Caco-2 (cell line): ENCODE measurements at regions of chr17 and their contacts with region 1.

Region 1: DNA sequence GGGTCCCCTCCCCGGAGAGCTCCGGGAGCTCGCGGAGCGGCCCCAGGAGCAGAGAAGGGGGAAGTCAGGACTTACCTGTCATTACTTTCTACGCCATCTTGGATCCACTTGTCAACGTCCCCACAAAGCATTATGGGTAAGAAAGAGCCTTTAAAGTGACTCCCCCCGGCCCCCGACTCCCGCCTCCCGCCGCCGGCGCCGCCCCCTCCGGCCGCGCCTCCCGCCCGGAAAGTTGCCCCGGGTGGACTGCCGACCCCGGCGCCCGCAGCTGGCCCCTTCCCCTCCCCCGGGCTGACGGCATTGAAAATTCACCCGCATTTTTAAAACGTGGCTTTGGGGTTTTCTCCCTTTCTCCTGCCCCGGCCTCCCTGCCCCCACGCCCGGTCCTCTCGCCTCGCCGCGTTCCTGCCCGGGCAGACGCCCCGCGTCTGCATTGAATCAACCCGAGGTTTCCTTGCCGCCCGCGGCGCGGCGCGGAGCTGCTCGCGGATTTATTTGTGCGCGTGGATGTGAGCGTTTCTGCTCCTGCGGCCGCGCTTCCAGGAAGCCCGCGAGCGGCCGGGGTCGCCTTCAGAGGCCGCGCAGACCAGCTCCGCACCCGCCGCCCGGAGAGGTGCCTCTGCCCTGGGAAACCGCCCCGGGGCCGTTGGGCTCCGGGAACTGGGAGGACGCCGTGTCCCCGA is at the start of gene HELZ:
- DNase-seq: peak; percentile 89 to 92
- H3K4me3 ChIP-seq: peak within 1 kb of the TSS; percentile 92
- H3K4me3 Mint-ChIP-seq: peak within 1 kb of the TSS; percentile 92
- H3K27ac Mint-ChIP-seq: peak within 1 kb of the TSS; percentile 93
- H3K4me1 ChIP-seq: peaks cover 36% of the 10 kb centered on the region
- H3K4me1 Mint-ChIP-seq: peaks cover 39% of the 10 kb centered on the region
- H3K27me3 ChIP-seq: no peaks in the 10 kb centered on the region
- H3K27me3 Mint-ChIP-seq: no peaks in the 10 kb centered on the region
- CTCF ChIP-seq: no peak
- total RNA-seq, gene HELZ: 63.8 and 70.0 TPM in 2 replicates

Region 2: DNA sequence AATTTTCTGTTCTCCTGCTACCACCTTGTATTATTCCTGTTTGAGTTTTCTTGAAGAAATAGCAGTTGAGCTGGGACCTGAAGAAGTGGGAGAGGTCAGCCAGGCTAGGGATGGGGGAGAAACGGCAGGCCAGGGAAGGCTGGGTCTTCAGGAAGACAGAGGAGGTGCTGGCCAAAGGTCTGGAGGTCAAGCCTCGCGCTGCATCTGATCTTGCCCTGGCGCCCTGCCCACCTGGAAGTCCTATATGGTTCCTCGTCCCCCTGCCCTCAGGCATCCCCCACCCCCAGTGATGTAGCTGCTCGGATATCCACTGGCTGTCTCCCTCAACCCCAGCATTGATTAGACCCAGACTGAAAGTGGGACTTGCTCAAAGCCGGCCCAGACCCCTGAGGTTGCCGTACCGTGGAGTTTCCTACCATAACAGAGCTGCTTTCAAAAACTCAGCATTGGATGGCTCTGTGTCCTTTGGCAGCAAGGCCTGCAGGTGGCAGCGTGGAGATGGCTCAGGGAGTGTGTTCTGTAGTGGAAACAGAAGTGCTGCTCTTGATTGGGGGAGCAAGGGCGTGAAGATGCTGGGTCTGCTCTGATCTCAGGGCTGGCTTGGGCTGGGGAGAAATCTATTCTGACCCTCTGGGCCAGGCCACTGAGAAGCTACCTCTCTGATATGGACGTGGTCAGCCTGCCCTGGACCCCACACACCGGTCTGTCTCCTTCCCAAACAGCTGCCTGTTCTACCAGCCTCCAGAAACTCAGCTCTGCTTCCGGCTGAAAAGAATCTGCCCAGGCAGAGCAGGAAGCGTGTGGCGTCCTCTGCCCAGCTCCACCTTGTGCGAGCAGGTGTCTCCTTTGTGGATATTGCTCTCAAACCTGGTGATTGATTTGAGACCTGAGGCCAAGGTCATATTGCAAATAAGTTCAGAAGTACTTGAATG is 517.3 kb before region 1 on chr17:
- CTCF ChIA-PET with region 1: no interaction called
- POLR2A ChIA-PET with region 1: no interaction called
- intact Hi-C with region 1: loop called (anchors 10 kb)
- DNase-seq: peak; percentile 62 to 69
- H3K4me3 ChIP-seq: no peak overlapping the region
- H3K4me3 Mint-ChIP-seq: no peak overlapping the region
- H3K27ac Mint-ChIP-seq: no peak overlapping the region
- H3K4me1 ChIP-seq: no peaks in the 10 kb centered on the region
- H3K4me1 Mint-ChIP-seq: no peaks in the 10 kb centered on the region
- H3K27me3 ChIP-seq: no peaks in the 10 kb centered on the region
- H3K27me3 Mint-ChIP-seq: no peaks in the 10 kb centered on the region
- CTCF ChIP-seq: peak; percentile 60 to 90

Region 3: DNA sequence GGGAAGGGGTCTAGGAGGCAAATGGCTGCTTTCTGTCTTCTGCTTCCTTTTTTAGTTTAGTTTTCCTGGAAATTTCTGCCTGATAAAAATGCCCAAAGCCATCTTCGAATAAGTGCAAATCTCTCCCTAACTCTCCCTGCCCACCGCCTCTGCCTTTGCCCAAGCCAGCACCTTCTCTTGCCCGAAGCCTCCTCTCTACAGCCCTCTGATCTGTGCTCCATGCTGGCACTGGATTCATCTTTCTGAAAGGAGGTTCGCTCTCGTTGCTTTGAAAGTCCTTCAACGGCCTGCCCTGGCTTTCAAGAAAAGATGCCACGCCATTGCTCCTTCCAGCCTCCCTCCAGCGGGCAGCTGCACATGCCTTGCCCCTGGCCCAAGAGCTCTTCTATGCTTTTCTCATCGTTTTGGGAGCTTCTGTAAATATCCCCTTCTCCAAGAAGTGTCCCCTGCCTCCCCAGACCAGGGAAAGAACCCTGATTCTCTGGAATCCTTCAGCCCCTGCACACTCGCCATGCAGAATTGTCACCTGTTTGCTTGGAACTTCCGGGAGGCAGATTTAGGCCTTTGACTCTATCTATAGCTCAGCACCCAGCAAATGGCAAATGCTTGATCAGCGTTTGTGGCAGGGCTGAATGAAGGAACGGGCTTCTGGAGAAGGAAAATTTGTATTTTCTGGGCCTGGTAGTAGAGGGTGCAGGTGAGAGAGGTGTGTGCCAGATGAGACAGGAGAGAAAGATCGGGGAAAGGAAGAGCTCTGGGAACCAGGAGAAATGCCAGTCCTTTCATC is 299.2 kb before region 1 on chr17:
- CTCF ChIA-PET with region 1: no interaction called
- POLR2A ChIA-PET with region 1: interaction called, 14 read pairs
- intact Hi-C with region 1: no loop called
- DNase-seq: no peak
- H3K4me3 ChIP-seq: no peak overlapping the region
- H3K4me3 Mint-ChIP-seq: no peak overlapping the region
- H3K27ac Mint-ChIP-seq: peak overlapping the region; percentile 26
- H3K4me1 ChIP-seq: peaks cover 40% of the 10 kb centered on the region
- H3K4me1 Mint-ChIP-seq: peaks cover 59% of the 10 kb centered on the region
- H3K27me3 ChIP-seq: no peaks in the 10 kb centered on the region
- H3K27me3 Mint-ChIP-seq: no peaks in the 10 kb centered on the region
- CTCF ChIP-seq: no peak

Region 4: DNA sequence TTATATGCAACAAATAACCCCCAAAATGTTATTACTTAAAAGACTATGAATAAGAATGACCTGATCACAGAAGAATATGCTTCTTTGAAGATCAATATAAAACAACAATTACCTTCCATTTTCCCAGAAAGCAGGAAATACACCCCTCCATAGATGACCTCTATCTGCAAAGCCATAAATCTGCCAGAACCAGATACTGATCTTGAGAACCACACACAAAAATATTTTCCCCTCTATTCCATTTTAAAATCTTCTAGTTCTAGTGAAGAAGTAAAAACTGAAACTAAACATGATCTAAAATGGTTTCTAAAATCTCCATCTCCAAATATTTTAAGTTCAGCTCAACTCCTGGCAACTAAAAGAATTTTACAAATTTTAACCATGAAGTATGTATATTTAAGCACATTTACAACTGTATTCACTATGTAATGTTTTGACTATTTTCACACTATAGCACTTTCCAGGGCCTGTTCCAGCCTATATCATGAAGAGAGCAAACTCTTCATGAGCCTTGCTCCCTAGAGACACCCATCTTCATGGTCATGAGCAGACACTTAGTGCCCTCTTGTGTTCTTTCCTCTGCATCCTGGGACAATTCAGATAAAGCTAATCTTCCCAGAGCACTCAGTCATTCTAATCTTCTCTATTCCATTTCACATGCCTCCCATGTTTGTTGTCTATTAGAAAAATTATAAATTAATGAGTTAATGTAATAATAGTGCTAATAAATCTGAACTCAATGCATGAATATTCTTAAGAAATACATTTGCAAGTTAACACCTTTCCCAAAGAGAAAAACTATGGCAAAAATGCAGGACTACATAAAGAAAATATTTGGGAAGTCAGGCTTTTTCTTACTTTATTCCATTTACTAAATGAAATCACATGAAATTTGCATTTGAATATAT is 87.2 kb before region 1 on chr17:
- CTCF ChIA-PET with region 1: no interaction called
- POLR2A ChIA-PET with region 1: no interaction called
- intact Hi-C with region 1: no loop called
- DNase-seq: peak in 1 of 2 experiments; percentile 36
- H3K4me3 ChIP-seq: no peak overlapping the region
- H3K4me3 Mint-ChIP-seq: no peak overlapping the region
- H3K27ac Mint-ChIP-seq: no peak overlapping the region
- H3K4me1 ChIP-seq: 0 out of 2 replicates have a peak, but pooled peaks cover 4% of the 10 kb centered on the region
- H3K4me1 Mint-ChIP-seq: no peaks in the 10 kb centered on the region
- H3K27me3 ChIP-seq: no peaks in the 10 kb centered on the region
- H3K27me3 Mint-ChIP-seq: no peaks in the 10 kb centered on the region
- CTCF ChIP-seq: peak in 1 of 2 experiments; percentile 39

Region 5: DNA sequence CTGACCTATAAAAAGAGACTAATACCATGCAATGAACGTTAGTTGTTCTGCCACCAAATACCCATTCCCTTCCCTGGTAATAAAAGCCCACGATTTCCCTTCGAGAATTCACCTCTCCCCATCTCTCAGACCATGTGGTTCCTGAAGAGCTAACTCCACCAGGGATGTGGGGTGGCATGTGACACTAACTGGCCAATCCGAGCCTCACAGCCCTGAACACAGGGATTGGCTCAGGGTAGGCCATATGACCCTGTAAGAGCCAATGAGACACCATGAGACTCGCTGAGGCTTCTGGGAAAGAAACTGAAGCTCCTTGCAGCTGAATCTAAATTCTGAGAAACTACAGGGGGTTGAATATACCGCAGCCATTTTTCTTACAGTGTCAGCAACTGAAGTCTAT is 21.3 kb before region 1 on chr17:
- CTCF ChIA-PET with region 1: interaction called, 4 read pairs
- POLR2A ChIA-PET with region 1: interaction called, 7 read pairs
- intact Hi-C with region 1: loop called (anchors 2 kb)
- DNase-seq: peak; percentile 86 to 88
- H3K4me3 ChIP-seq: peak overlapping the region; percentile 45
- H3K4me3 Mint-ChIP-seq: peak overlapping the region; percentile 68
- H3K27ac Mint-ChIP-seq: peak overlapping the region; percentile 70
- H3K4me1 ChIP-seq: peaks cover 8% of the 10 kb centered on the region; the same call in 1 of the 2 replicates
- H3K4me1 Mint-ChIP-seq: peaks cover 13% of the 10 kb centered on the region
- H3K27me3 ChIP-seq: no peaks in the 10 kb centered on the region
- H3K27me3 Mint-ChIP-seq: no peaks in the 10 kb centered on the region
- CTCF ChIP-seq: no peak

Region 6: DNA sequence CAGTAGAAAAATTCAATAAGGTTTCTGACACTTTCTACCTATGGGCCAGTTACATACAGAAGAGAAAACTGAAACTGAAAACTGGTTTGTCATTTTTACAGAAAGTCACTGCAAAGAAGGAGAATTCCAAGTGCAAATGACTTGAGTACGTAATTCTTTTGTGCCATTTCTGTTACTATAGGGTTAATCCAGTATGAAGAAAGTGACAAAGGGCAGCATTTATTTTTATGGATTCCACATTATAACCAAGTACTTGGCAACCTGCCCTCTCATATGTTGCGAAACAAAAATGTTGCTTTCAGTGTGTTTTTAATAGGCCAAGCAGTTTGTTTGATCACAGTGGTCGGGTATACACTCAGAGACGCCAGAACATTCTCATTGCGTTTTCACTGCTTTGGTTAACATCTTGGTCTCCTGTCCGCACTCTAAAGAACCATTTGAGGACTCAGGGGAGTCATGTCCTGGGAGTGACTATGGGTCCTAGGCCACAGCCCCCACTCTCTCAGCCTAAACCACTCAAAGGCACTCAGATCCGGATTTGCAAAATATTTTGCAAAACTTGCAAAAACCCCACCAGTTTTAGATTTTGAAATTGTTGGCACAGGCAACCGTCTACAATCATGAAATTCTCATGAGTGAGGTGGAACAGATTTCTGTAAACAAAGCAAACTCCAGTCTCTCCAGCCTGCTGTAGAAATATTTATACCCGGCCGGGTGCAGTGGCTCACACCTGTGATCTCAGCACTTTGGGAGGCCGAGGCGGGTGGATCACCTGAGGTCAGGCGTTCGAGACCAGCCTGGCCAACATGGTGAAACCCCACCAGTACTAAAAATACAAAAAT is 15.2 kb after region 1 on chr17:
- CTCF ChIA-PET with region 1: no interaction called
- POLR2A ChIA-PET with region 1: interaction called, 11 read pairs
- intact Hi-C with region 1: no loop called
- DNase-seq: no peak
- H3K4me3 ChIP-seq: no peak overlapping the region
- H3K4me3 Mint-ChIP-seq: no peak overlapping the region
- H3K27ac Mint-ChIP-seq: no peak overlapping the region
- H3K4me1 ChIP-seq: peaks cover 5% of the 10 kb centered on the region; the same call in 1 of the 2 replicates
- H3K4me1 Mint-ChIP-seq: no peaks in the 10 kb centered on the region
- H3K27me3 ChIP-seq: no peaks in the 10 kb centered on the region
- H3K27me3 Mint-ChIP-seq: no peaks in the 10 kb centered on the region
- CTCF ChIP-seq: no peak